GM18951 (cell line): ENCODE measurements at regions of chr3 and their contacts with region 1.

Region 1: DNA sequence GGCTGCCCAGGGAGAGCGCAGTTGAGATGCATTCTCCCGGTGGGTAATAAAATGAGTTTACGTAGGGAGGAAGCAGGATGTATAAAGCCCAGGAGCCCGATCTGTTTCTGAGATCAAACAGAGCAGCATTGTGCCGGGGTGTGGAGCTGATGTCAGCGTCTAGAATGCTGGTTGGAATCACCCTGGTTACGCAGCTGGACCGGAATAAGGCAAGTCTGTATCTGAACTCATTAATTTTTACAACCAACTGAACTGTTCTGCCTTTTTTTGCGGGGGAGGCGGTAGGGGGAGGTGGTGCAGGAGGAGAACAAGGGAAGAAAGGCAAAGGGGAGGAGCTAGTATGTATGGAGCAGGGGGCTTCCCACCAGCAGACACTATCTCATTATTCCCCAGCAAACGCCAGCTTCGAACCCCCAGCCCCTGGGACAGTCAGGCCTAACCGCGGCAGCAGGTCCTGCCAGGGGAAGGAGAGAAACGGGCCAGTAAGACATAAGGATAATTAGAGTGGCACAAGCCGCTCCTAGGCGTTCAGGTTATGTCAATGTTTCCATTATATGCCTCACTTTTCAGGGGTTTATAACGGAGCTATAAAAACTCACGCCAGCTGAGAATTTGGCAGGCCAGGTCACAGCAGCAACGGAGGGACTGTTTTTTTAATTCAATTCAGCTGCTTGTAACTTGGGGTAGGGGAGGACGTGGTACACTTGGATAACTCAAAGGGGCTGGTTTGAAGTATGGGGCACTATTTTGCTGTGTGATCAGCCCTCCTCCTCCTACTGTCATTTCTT is 175.3 kb upstream of the HES1 start:
- POLR2A ChIP-seq: no peak

Region 2: DNA sequence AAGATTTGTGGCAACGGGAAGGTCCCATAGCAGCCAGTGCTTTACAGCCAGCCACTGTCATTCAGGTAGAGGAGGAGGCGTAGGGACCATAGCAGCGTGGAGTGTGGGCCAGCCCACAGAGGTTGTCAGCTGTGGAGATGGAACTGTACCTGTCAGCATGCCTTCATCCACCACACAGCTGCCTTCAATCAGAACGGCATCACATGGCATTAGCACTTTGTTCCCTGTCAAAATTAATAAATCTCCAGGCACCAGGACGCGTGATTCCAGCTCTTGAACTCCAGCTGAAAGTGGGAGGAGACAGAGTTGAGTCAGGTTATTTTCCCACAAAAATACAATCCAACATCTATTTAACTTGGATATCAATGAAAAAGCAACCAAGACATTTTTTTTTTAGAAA is 490.0 kb before region 1 on chr3:
- in situ Hi-C with region 1: loop called (anchors 10 kb)
- POLR2A ChIP-seq: no peak